Sigmoid colon (tissue), 7 donors: ENCODE measurements at regions of chr14 and their contacts with region 1.

Region 1: DNA sequence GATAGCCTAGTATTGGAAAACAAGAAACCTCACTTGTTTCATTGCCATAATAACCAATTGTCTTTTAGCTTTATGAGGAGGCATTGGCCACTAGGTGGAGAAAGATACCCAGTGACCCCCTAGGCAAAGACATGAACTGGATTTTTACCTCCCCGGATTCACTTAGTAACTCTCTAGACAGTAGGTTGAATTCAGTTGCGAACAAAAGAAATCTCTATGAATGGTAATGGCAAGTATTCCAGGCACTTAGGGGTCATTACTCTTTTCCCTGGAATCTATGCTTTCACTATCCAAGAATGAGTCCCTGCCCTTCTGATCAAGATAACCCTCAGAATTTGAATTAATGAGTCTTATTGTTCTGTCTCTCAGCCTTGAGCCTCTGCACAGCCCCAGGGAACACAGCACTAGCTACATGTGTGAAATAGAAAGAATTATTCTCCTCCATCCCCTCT is 29.5 kb upstream of the RHOJ start:
- DNase-seq: no peak
- H3K4me3 ChIP-seq: no peak overlapping the region
- H3K27ac ChIP-seq: no peak overlapping the region
- H3K4me1 ChIP-seq: peaks cover 0 to 18% (median 10%) of the 10 kb centered on the region in 4 donors
- H3K27me3 ChIP-seq: no peaks in the 10 kb centered on the region
- CTCF ChIP-seq: peak; percentile 31 to 71 (median 61)
- EP300 ChIP-seq: no peak
- POLR2A ChIP-seq: no peak

Region 2: DNA sequence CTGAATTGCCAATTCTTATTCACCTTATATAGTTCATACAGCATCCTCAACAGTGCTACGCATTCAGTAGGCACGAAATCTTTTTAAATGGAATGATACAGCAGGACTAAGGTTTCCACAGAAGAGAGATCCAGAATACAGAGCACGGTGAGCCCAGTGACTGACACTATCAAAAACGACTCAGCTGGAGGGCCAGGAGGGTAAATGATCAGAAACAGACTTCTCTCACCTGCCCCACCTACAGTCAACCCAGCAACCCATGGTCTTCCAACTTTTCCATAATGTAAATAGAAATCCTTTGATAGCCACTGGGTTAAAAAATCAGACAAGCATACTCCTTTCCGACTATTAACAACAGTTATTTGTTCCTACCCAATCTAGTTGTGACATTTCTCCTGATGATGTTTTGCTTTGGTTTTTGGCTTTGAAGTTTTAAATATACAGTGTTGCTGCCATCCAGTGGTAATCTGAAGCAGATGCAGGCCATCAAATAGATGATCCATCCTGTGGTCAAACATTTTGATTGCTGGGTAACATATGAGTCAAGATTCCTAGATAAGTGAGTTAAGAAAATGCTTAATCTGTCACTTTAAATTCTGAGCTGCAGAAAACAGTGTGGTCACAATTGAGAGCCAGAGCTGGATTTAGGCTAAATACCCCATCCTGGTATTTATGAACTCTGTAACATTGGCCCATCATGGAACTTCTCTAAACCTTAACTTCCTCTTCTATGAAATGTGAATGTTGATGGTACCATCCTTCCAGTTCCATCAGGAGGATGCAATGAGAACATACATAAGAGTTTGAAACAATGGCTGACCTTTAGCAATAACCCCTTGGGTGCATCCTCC is 101.9 kb after region 1 on chr14:
- intact Hi-C with region 1: loop called (anchors 1 kb)
- DNase-seq: no peak
- H3K4me3 ChIP-seq: no peak overlapping the region
- H3K27ac ChIP-seq: no peak overlapping the region
- H3K4me1 ChIP-seq: peaks cover 0 to 5% (median 0%) of the 10 kb centered on the region in 4 donors
- H3K27me3 ChIP-seq: no peaks in the 10 kb centered on the region
- CTCF ChIP-seq: peak; percentile 65 to 81 (median 76)
- EP300 ChIP-seq: no peak
- POLR2A ChIP-seq: no peak

Region 3: DNA sequence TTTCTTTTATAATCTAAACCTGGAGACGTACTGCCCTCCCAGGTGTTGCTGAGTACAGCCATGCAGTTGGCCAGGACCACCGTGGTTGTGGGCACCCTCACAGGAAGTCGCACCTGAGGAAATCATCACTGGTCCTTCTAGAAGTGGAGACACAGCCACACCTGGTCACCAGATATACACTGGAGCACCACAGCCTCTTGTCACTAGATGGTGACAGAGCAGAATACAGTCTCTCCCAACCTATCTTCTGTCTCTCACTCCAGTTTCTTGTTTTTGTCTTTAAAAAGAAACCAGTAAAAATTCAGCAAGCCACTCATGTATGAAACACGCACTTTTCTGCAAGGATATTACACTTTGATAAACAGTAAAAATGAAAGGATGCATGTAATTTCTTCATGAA is 187.0 kb after region 1 on chr14:
- intact Hi-C with region 1: loop called (anchors 10 kb)
- DNase-seq: no peak
- H3K4me3 ChIP-seq: no peak overlapping the region
- H3K27ac ChIP-seq: no peak overlapping the region
- H3K4me1 ChIP-seq: no peaks in the 10 kb centered on the region
- H3K27me3 ChIP-seq: no peaks in the 10 kb centered on the region
- CTCF ChIP-seq: no peak
- EP300 ChIP-seq: no peak
- POLR2A ChIP-seq: no peak

Region 4: GRCh38 chr14:63448841-63449240 is 274.1 kb after region 1 on chr14:
- intact Hi-C with region 1: no loop called
- DNase-seq: no peak
- H3K4me3 ChIP-seq: no peak overlapping the region
- H3K27ac ChIP-seq: no peak overlapping the region
- H3K4me1 ChIP-seq: peaks cover 0 to 34% (median 16%) of the 10 kb centered on the region in 4 donors
- H3K27me3 ChIP-seq: no peaks in the 10 kb centered on the region
- CTCF ChIP-seq: no peak
- EP300 ChIP-seq: no peak
- POLR2A ChIP-seq: no peak